Dendritic cell treated with granulocyte-macrophage colony-stimulating factor and Interleukin-4, amounts not matched to agents 40 ng/mL and 50 ng/mL, for 4 days (primary cell): ENCODE measurements at regions of chr22 and their contacts with region 1.

Region 1: GRCh38 chr22:39236321-39237317 is 8.2 kb downstream of the PDGFB start:
- H3K4me3 Mint-ChIP-seq: peak overlapping the region; percentile 42
- H3K27ac Mint-ChIP-seq: no peak overlapping the region
- H3K4me1 Mint-ChIP-seq: peaks cover 89% of the 10 kb centered on the region
- H3K27me3 Mint-ChIP-seq: peaks cover 96% of the 10 kb centered on the region

Region 2: GRCh38 chr22:39283322-39284004 is 46.8 kb after region 1 on chr22:
- intact Hi-C with region 1: loop called (anchors 5 kb)
- H3K4me3 Mint-ChIP-seq: peak overlapping the region; percentile 20
- H3K27ac Mint-ChIP-seq: peak overlapping the region; percentile 90
- H3K4me1 Mint-ChIP-seq: peaks cover 88% of the 10 kb centered on the region
- H3K27me3 Mint-ChIP-seq: peaks cover 8% of the 10 kb centered on the region

Region 3: GRCh38 chr22:39520054-39520891 is 283.7 kb after region 1 on chr22 and contains the start of gene ATF4:
- intact Hi-C with region 1: no loop called
- H3K4me3 Mint-ChIP-seq: peak within 1 kb of the TSS; percentile 94
- H3K27ac Mint-ChIP-seq: peak within 1 kb of the TSS; percentile 100
- H3K4me1 Mint-ChIP-seq: peaks cover 70% of the 10 kb centered on the region
- H3K27me3 Mint-ChIP-seq: no peaks in the 10 kb centered on the region